Posterior vena cava (tissue), 2 donors: ENCODE measurements at regions of chr12 and their contacts with region 1.

Region 1: GRCh38 chr12:89470741-89471509 is 53.7 kb downstream of the GALNT4 start:
- DNase-seq: no peak

Region 2: GRCh38 chr12:90745211-90745610 is 1274.3 kb after region 1 on chr12:
- intact Hi-C with region 1: loop called in 1 of 2 experiments (anchors 5 kb)
- DNase-seq: no peak